ENCODE measurements at regions of chr6 and their contacts with region 1.

Region 1: DNA sequence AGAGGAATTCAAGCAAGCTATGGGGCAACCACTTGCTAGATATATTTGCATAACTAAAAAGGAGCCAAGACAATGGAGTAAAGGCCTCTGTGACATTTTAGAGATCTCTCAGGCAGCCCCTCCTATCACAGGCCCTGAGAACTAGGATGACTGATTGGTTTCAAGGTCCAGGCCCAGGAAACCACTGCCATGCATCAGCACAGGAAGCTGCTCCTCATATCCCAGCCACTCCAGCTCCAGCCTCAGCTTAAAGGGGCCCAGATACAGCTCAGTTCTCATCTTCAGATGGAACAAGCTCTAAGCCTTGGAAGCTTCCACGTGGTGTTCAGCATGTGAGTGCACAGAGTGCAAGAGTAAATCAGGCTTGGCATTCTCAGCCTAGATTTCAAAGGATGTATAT is 21.1 kb upstream of the THBS2 start:
- DNase-seq: no peak
- ATAC-seq: no peak
- H3K4me3 ChIP-seq: no peak overlapping the region
- H3K27ac ChIP-seq: no peak overlapping the region
- H3K4me1 ChIP-seq: no peaks in the 10 kb centered on the region
- H3K27me3 ChIP-seq: no peaks in the 10 kb centered on the region
- CTCF ChIP-seq: no peak

Region 2: DNA sequence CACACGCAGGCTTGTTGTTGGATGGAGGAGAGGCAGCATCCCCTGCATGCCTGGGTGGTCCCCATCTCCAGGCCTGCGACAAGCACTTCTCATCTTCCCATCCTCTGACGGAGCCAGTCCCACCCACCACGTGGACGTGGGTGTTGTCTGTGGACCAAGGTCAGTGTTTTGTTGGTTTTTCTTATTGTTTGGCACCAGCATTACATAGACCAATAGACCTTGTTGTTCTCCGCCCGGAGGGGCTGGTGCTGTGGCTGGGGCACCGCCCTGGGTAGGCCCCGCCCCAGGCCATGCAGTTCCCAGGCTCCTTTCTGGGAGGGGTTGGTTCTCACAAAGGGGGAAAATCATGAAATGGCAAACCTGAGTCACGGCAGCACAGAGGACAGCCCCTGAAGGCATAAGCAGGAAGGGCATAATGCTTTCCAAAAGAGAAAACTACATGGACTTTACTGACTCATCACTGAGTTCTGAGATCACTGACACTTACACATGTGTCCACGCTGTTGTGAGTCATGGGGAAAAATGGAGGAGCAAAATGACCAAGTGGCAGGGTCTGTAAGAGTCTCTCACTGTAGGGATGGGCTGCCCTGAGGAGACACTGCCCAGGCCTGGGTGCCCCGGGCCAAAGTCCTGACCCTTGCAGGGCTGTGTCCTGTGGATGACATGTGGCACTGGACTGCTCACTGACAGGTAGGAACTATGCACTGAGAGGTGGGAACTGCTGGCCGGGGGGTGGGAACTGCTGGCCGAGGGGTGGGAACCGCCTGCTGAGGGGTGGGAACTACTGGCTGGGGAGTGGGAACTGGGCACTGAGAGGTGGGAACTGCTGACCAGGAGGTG is 111.8 kb before region 1 on chr6:
- CTCF ChIA-PET with region 1: no interaction called
- POLR2A ChIA-PET with region 1: no interaction called
- intact Hi-C with region 1: no loop called
- DNase-seq: peak; percentile 90
- ATAC-seq: no peak
- H3K4me3 ChIP-seq: no peak overlapping the region
- H3K27ac ChIP-seq: peak overlapping the region; percentile 95
- H3K4me1 ChIP-seq: peaks cover 11% of the 10 kb centered on the region; the same call in 1 of the 2 replicates
- H3K27me3 ChIP-seq: no peaks in the 10 kb centered on the region
- CTCF ChIP-seq: no peak

Region 3: DNA sequence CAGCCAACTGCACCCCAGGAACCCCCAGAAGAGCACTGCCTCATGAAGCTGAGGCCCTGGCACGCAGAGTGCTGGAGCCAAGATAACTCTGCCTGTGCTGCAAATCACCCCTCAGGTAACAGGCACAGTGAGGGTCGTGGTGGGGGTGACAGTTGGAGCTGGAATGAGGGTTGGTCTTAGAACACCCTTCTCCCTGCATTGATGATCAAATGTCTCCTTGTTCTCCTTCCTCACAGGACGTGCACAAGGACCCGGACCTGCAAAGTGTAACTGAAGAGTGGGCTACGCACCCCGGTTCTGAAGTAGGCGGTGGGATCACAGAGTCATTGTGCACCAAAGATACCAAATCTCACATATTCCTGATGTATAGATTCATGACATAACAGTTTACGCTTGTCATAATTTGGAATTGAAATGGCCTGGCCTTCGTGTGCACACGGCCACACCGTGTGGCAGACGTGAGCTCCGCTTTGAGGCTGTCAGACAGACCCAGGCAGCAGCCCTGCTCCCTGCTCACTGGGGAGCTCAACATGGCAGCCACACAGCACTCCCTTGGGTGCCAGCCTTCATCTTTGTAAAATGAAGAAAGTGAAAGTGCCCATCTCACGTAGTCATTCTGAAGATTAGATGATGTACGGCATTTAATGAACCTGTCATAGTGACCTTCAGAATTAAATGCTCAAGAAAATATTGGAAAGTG is 29.9 kb before region 1 on chr6:
- CTCF ChIA-PET with region 1: no interaction called
- POLR2A ChIA-PET with region 1: interaction called, 35 read pairs
- intact Hi-C with region 1: no loop called
- DNase-seq: no peak
- ATAC-seq: no peak
- H3K4me3 ChIP-seq: no peak overlapping the region
- H3K27ac ChIP-seq: no peak overlapping the region
- H3K4me1 ChIP-seq: peaks cover 6% of the 10 kb centered on the region; the same call in 1 of the 2 replicates
- H3K27me3 ChIP-seq: no peaks in the 10 kb centered on the region
- CTCF ChIP-seq: no peak

Region 4: DNA sequence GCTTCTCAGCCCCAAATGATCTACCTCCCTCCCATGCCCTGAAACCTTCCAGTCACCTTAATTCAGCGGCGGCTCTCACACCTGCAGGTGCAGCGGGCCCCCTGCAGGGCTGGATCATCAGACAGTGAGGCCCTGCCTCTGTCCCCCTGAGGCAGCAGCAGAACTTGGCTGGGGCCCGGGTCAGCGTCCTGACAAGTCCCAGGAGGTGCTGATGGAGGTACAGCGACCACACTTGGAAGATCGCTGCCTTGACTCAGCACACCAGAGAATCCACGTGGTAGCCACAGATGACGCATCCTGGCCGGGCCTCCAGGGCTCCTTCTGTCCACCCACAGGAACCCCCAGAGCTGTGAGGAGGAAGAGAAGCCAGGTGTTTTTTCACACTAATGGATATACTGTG is 95.3 kb after region 1 on chr6:
- CTCF ChIA-PET with region 1: no interaction called
- POLR2A ChIA-PET with region 1: no interaction called
- intact Hi-C with region 1: no loop called
- DNase-seq: no peak
- ATAC-seq: no peak
- H3K4me3 ChIP-seq: no peak overlapping the region
- H3K27ac ChIP-seq: no peak overlapping the region
- H3K4me1 ChIP-seq: no peaks in the 10 kb centered on the region
- H3K27me3 ChIP-seq: no peaks in the 10 kb centered on the region
- CTCF ChIP-seq: no peak

Measured in PC-3 (cell line).